ENCODE measurements at regions of chr4 and their contacts with region 1.

Region 1: DNA sequence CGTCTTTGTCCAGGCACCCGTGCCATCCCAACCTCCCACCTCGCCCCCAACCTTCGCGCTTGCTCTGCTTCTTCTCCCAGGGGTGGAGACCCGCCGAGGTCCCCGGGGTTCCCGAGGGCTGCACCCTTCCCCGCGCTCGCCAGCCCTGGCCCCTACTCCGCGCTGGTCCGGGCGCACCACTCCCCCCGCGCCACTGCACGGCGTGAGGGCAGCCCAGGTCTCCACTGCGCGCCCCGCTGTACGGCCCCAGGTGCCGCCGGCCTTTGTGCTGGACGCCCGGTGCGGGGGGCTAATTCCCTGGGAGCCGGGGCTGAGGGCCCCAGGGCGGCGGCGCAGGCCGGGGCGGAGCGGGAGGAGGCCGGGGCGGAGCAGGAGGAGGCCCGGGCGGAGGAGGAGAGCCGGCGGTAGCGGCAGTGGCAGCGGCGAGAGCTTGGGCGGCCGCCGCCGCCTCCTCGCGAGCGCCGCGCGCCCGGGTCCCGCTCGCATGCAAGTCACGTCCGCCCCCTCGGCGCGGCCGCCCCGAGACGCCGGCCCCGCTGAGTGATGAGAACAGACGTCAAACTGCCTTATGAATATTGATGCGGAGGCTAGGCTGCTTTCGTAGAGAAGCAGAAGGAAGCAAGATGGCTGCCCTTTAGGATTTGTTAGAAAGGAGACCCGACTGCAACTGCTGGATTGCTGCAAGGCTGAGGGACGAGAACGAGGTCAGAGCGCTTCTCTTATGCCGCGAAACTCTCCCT is at the start of gene TET2:
- DNase-seq: peak; percentile 87
- ATAC-seq: peak; percentile 88
- H3K4me3 ChIP-seq: peak within 1 kb of the TSS; percentile 94
- H3K27ac ChIP-seq: peak within 1 kb of the TSS; percentile 95
- H3K4me1 ChIP-seq: 0 out of 2 replicates have a peak, but pooled peaks cover 2% of the 10 kb centered on the region
- H3K27me3 ChIP-seq: no peaks in the 10 kb centered on the region
- CTCF ChIP-seq: no peak
- POLR2A ChIP-seq: peak; percentile 82
- RAD21 ChIP-seq: no peak; the same call in 1 of the 2 replicates
- total RNA-seq, gene TET2: 22.8 and 25.3 TPM in 2 replicates

Region 2: GRCh38 chr4:105088110-105088879 is 58.2 kb before region 1 on chr4:
- CTCF ChIA-PET with region 1: no interaction called
- POLR2A ChIA-PET with region 1: interaction called, 4 read pairs
- dilution Hi-C with region 1: no loop called
- in situ Hi-C with region 1: no loop called
- intact Hi-C with region 1: loop called (anchors 1 kb)
- DNase-seq: peak; percentile 98
- ATAC-seq: peak; percentile 94
- H3K4me3 ChIP-seq: peak overlapping the region; percentile 24
- H3K27ac ChIP-seq: peak overlapping the region; percentile 64; the same call in 1 of the 2 replicates
- H3K4me1 ChIP-seq: peaks cover 5% of the 10 kb centered on the region; the same call in 1 of the 2 replicates
- H3K27me3 ChIP-seq: no peaks in the 10 kb centered on the region
- CTCF ChIP-seq: no peak
- POLR2A ChIP-seq: peak; percentile 71
- RAD21 ChIP-seq: no peak

Region 3: GRCh38 chr4:105191621-105192210 is 45.3 kb after region 1 on chr4:
- CTCF ChIA-PET with region 1: no interaction called
- POLR2A ChIA-PET with region 1: no interaction called
- dilution Hi-C with region 1: no loop called
- in situ Hi-C with region 1: no loop called
- intact Hi-C with region 1: loop called (anchors 5 kb)
- DNase-seq: peak; percentile 72
- ATAC-seq: peak; percentile 33
- H3K4me3 ChIP-seq: no peak overlapping the region
- H3K27ac ChIP-seq: no peak overlapping the region
- H3K4me1 ChIP-seq: peaks cover 9% of the 10 kb centered on the region
- H3K27me3 ChIP-seq: no peaks in the 10 kb centered on the region
- CTCF ChIP-seq: no peak
- POLR2A ChIP-seq: no peak
- RAD21 ChIP-seq: no peak

Region 4: DNA sequence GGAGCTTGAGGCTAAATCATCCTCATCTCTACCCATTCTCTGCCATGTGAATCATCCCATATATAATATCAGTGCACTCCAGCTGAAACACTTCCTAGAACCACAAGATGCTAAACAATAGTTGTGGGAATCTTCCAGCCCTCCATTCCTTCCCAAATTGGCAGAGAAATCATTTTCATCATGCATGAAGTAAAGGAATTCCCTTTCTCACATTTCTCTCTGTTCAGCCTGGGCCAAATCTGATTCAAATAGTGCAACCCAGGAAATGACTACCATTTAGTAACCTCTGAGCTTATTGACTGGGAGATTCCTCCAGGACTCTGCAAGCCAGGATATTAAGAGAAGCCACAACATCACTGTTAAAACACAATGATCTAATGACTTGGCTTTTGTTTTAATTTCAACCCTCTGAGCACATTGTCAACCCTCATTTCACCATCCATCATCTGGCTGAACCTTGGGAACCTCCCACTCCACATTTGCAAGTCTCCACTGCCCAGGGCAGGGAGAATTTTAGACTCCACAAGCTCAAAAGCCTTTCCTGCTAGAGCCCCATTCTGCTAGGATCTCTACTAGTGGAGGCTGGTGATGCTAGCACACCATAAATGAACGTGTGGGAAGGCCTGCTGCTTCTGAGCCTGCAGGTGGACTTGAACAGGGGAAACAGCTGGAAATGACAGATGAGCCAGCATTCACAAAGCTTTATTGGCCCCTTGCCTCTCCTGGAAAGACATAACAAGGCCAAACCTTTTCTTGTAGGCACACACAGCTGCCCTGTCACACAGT is 134.1 kb after region 1 on chr4:
- CTCF ChIA-PET with region 1: no interaction called
- POLR2A ChIA-PET with region 1: no interaction called
- dilution Hi-C with region 1: no loop called
- in situ Hi-C with region 1: no loop called
- intact Hi-C with region 1: loop called (anchors 2 kb)
- DNase-seq: peak; percentile 97
- ATAC-seq: peak; percentile 95
- H3K4me3 ChIP-seq: no peak overlapping the region
- H3K27ac ChIP-seq: peak overlapping the region; percentile 59
- H3K4me1 ChIP-seq: peaks cover 8% of the 10 kb centered on the region
- H3K27me3 ChIP-seq: no peaks in the 10 kb centered on the region
- CTCF ChIP-seq: no peak
- POLR2A ChIP-seq: no peak
- RAD21 ChIP-seq: no peak

Region 5: DNA sequence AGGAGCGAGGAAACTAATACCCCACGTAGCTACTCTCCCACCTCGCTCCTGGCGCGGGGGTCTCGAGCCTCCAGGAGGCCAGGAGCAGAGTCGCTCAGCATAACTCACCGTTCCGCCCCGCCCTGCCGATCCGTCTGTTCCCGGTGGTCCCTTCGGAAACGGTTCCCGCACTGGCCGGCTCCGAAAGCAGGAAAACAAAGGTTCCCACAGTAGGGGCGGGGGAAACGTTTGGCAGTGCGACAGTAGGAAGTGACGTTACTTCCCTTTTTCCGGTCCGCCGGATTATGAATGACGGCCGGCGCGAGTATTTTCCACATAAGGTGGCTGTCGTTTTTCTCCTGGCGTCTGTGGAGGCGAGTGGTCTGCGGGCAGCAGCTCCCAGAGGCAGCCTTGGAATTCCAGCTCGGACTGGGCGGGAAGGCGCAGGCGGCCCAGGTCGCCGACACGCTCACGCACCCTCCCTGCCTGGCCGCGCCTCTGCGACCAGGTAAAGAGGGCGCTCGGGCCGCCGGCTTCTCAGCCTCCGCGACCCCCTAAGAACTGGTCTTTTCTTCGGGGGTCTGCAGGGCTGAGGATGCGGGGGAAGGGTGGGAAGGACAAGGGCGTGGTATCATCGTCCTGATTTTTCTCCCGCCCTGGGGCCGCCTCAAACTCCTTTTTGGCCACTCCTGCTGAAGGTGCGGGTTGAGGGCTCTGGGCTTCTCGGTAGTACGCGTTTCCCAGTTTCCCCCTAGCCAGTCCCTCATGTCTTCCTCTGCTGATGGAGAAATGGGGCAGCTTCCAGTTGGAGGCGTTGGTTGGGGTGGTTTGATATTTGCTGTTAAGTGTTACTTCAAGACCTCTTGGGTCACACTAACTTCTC is 562.3 kb after region 1 on chr4 and contains the starts of genes GSTCD and INTS12:
- CTCF ChIA-PET with region 1: no interaction called
- POLR2A ChIA-PET with region 1: no interaction called
- dilution Hi-C with region 1: no loop called
- in situ Hi-C with region 1: no loop called
- intact Hi-C with region 1: loop called (anchors 10 kb)
- DNase-seq: peak; percentile 93
- ATAC-seq: peak; percentile 99
- H3K4me3 ChIP-seq: peak within 1 kb of the TSS; percentile 59
- H3K27ac ChIP-seq: peak within 1 kb of the TSS; percentile 75
- H3K4me1 ChIP-seq: no peaks in the 10 kb centered on the region
- H3K27me3 ChIP-seq: no peaks in the 10 kb centered on the region
- CTCF ChIP-seq: no peak
- POLR2A ChIP-seq: peak; percentile 89
- RAD21 ChIP-seq: no peak
- total RNA-seq, gene GSTCD: 16.7 and 20.3 TPM in 2 replicates
- total RNA-seq, gene INTS12: 30.8 and 36.0 TPM in 2 replicates

Measured in IMR-90 (cell line).